ENCODE measurements at regions of chr5 and their contacts with region 1.

Region 1: GRCh38 chr5:52799983-52800393 is 12.3 kb downstream of the ITGA1 start:
- DNase-seq: peak; percentile 97 to 99 (median 98)
- ATAC-seq: peak; percentile 93 to 95
- H3K4me3 ChIP-seq: peak overlapping the region; percentile 57
- H3K27ac ChIP-seq: peak overlapping the region; percentile 90
- H3K4me1 ChIP-seq: peaks cover 4% of the 10 kb centered on the region
- H3K27me3 ChIP-seq: no peaks in the 10 kb centered on the region

Region 2: GRCh38 chr5:52893105-52893504 is 93.1 kb after region 1 on chr5:
- intact Hi-C with region 1: loop called in 1 of 4 experiments (anchors 10 kb)
- DNase-seq: no peak
- ATAC-seq: peak; percentile 48 to 59
- H3K4me3 ChIP-seq: no peak overlapping the region
- H3K27ac ChIP-seq: no peak overlapping the region
- H3K4me1 ChIP-seq: peaks cover 6% of the 10 kb centered on the region
- H3K27me3 ChIP-seq: no peaks in the 10 kb centered on the region

Region 3: DNA sequence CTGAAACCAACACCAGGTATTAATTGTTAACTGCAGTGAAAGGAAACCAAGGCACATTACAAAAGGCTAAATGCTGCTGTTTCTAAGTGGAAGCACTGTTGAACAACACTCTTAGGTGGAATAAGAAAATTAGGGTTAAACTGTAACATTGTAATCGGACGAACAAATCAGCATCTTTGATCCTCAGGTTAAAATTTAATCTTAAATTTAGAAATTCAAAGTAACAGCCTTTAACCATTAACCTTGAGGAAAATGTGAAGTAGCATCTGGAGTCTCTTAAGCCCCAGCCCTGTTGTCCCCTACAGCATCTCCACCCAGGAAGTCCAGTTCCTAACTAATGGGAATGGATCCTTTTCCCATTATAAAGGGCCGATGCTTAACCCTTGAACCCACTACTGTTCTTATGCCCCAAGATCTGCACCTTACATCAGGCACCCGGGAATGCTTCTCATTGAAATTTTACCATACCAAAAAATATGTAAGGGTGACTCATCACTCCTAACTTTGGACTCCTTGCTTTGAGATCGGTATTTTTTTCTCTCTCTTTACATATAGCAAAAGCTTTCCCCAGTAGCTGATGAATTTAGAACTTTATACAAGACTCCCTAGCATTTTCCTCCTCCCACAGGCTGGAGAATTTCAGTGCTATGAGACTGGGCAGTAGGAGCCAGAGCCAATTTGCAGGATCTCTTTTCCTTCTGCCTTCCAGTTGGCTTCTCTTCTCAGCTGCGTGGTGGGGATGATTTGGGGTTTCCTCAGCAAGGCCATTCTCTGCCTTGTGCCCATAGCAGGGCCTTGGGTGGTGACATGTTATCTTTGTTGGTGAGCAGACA is 157.1 kb after region 1 on chr5:
- intact Hi-C with region 1: no loop called
- DNase-seq: no peak
- ATAC-seq: no peak
- H3K4me3 ChIP-seq: no peak overlapping the region
- H3K27ac ChIP-seq: no peak overlapping the region
- H3K4me1 ChIP-seq: no peaks in the 10 kb centered on the region
- H3K27me3 ChIP-seq: no peaks in the 10 kb centered on the region

Region 4: DNA sequence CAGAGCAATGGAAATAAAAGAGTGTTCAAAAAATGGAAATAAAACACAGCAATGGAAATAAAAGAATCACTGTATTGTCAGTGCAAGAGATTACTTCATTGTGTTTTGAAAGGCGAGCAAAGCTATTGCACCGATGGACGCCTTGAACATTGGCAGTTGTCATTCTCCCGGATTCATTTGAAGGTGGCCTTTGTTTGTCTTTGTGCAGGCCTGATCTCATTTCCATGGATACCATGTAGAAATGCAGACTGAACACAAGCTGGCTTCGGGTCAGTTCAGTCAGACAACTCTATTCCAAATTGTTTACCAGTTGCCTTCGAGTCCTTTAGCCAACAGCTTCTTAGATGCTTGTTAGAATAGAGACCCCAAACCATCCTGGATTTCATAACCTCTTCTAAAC is 197.4 kb after region 1 on chr5:
- intact Hi-C with region 1: no loop called
- DNase-seq: no peak
- ATAC-seq: no peak
- H3K4me3 ChIP-seq: no peak overlapping the region
- H3K27ac ChIP-seq: no peak overlapping the region
- H3K4me1 ChIP-seq: no peaks in the 10 kb centered on the region
- H3K27me3 ChIP-seq: no peaks in the 10 kb centered on the region